ENCODE measurements at regions of chr19 and their contacts with region 1.

Region 1: GRCh38 chr19:47514869-47515588 is at the start of gene NAPA:
- DNase-seq: peak; percentile 100
- H3K4me3 ChIP-seq: peak within 1 kb of the TSS; percentile 94
- H3K27ac ChIP-seq: peak within 1 kb of the TSS; percentile 92
- H3K4me1 ChIP-seq: peaks cover 3% of the 10 kb centered on the region
- H3K27me3 ChIP-seq: no peaks in the 10 kb centered on the region
- CTCF ChIP-seq: no peak
- total RNA-seq, gene NAPA: 88.9 and 90.9 TPM in 2 replicates

Region 2: GRCh38 chr19:47436712-47437401 is 78.2 kb before region 1 on chr19:
- CTCF ChIA-PET with region 1: interaction called, 4 read pairs
- POLR2A ChIA-PET with region 1: no interaction called
- intact Hi-C with region 1: loop called (anchors 5 kb)
- DNase-seq: peak; percentile 78
- H3K4me3 ChIP-seq: no peak overlapping the region
- H3K27ac ChIP-seq: no peak overlapping the region
- H3K4me1 ChIP-seq: no peaks in the 10 kb centered on the region
- H3K27me3 ChIP-seq: no peaks in the 10 kb centered on the region
- CTCF ChIP-seq: peak; percentile 90

Region 3: GRCh38 chr19:47447470-47448359 is 67.3 kb before region 1 on chr19:
- CTCF ChIA-PET with region 1: no interaction called
- POLR2A ChIA-PET with region 1: no interaction called
- intact Hi-C with region 1: loop called (anchors 2 kb)
- DNase-seq: peak; percentile 79
- H3K4me3 ChIP-seq: peak overlapping the region; percentile 19
- H3K27ac ChIP-seq: no peak overlapping the region
- H3K4me1 ChIP-seq: peaks cover 17% of the 10 kb centered on the region
- H3K27me3 ChIP-seq: peaks cover 7% of the 10 kb centered on the region
- CTCF ChIP-seq: no peak

Region 4: GRCh38 chr19:47541518-47541917 is 26.5 kb after region 1 on chr19:
- CTCF ChIA-PET with region 1: no interaction called
- POLR2A ChIA-PET with region 1: interaction called, 13 read pairs
- intact Hi-C with region 1: no loop called
- DNase-seq: no peak
- H3K4me3 ChIP-seq: no peak overlapping the region
- H3K27ac ChIP-seq: no peak overlapping the region
- H3K4me1 ChIP-seq: no peaks in the 10 kb centered on the region
- H3K27me3 ChIP-seq: no peaks in the 10 kb centered on the region
- CTCF ChIP-seq: no peak

Region 5: DNA sequence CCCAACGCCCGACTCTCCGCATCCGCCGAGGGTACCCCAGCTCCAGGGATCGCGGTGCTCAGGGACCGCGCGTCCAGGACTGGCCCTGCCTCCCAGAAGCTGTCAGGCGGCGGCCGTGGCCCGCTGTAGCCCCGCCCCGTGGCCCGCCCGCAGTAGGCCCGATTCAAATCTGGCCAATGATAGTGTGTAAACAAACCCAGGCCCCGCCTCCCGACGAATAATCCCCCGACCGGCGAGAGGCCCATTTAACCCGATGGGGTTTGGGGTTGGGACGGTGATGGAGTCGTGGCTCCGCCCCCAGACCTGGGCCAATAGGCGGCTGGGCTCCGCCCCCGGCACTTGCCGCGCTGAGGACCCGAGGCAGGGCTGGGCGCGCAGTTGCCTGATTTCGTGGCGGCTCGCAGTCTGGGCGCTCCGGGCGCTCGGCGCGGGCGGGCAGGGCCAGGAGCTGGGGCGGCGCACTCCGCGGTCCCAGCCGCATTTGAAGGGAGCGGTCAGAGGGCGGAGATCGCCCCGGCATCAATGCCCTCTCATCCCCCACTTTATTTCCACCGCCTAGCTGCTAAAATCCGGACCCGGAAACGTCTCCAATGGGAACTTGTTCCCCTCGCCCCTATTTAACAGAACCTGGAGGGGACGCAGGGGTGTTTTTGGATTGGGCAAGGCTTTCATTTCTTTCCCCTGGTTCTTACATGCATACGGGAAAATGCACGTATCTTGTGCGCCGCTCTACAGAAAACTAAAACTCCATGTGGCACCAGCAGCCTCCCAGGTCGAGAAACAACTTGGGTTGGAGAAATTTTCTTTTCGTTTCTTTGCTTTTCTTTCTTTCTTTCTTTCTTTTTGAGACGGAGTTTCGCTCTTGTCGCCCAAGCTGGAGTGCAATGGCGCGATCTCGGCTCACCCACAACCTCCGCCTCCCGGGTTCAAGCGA is 85.5 kb after region 1 on chr19:
- CTCF ChIA-PET with region 1: no interaction called
- POLR2A ChIA-PET with region 1: no interaction called
- intact Hi-C with region 1: loop called (anchors 5 kb)
- DNase-seq: peak; percentile 100
- H3K4me3 ChIP-seq: peak overlapping the region; percentile 63
- H3K27ac ChIP-seq: peak overlapping the region; percentile 88
- H3K4me1 ChIP-seq: peaks cover 7% of the 10 kb centered on the region
- H3K27me3 ChIP-seq: no peaks in the 10 kb centered on the region
- CTCF ChIP-seq: no peak

Region 6: DNA sequence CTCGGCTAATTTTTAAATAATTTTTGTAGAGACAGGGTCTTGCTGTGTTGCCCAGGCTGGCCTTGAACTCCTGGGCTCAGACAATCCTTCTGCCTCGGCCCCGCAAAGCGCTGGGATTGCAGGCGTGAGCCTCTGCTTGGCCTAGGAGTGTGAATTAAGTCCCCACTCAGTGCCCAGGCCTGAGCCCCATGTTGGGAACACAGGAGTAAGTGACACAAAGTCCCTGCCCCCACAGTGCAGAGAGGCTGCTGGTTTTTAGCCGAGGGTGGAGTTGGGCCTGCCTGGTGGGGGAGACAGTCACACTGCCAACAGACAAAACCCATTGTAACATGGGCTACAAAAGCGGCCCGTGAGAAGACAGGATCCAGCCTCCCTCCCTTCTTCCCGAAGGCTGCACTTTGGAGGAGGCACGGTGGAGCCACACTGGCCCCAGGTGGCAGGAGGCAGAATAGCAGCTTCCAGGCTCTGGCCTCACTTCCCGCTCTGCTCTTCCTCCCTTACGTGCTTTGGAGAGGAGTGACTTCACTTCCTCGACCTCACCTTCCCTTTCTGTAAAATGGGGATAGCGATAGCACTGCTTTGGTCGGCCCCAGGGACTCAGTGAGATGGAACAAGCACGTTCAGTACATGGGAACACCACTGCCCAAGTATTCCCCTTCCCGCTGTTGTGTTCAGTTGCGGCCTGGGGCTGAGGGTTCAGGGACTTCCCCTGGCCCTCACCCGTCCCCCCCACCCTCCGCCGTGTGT is 183.0 kb after region 1 on chr19:
- CTCF ChIA-PET with region 1: no interaction called
- POLR2A ChIA-PET with region 1: no interaction called
- intact Hi-C with region 1: loop called (anchors 10 kb)
- DNase-seq: peak; percentile 89
- H3K4me3 ChIP-seq: no peak overlapping the region
- H3K27ac ChIP-seq: no peak overlapping the region
- H3K4me1 ChIP-seq: peaks cover 24% of the 10 kb centered on the region
- H3K27me3 ChIP-seq: no peaks in the 10 kb centered on the region
- CTCF ChIP-seq: peak; percentile 94

Measured in A673 (cell line).